ENCODE measurements at regions of chr9 and their contacts with region 1.

Region 1: GRCh38 chr9:68443624-68444023 is 87.2 kb downstream of the PGM5 start:
- DNase-seq: no peak
- ATAC-seq: no peak
- H3K4me3 ChIP-seq: no peak overlapping the region
- H3K27ac ChIP-seq: no peak overlapping the region
- H3K4me1 ChIP-seq: no peaks in the 10 kb centered on the region
- H3K27me3 ChIP-seq: peaks cover 4% of the 10 kb centered on the region
- CTCF ChIP-seq: no peak
- POLR2A ChIP-seq: no peak
- RAD21 ChIP-seq: no peak

Region 2: DNA sequence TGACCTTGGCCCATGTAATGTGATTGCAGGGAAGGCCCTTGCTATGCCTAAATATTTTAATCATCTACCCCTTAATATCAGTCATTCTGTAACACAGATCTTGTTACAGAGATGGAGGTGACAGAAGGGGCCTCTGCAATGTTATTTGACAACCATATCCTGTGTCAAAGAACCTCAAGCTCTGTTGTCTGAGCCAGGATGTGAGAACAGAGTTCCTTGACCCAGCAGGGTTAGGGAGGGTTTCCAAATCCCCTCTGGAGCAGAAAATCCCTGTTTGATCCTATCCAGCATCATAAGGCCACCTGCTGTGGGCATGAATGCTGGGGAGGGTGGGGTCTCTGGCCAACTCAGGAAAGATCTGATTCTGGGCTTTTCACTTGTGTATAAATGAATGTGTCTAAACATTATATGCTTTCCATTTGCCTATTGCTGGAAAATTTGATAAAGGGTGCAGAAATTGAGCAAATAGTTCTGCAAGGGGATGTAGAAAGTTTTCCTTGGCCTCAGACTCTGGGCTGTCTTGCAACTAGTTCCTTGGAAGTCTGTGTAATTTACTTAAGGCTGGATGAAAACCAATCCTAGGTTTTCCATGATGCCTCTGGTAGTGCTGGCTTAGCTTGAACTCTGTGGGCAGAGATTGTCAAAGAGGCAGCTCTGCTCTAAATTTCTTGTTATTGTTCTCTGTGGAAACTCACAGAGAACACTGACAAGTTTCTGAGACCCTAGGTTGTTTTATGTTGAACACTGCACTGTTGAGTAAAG is 16.2 kb before region 1 on chr9:
- CTCF ChIA-PET with region 1: no interaction called
- POLR2A ChIA-PET with region 1: no interaction called
- RAD21 ChIA-PET with region 1: no interaction called
- intact Hi-C with region 1: no loop called
- DNase-seq: no peak
- ATAC-seq: no peak
- H3K4me3 ChIP-seq: no peak overlapping the region
- H3K27ac ChIP-seq: no peak overlapping the region
- H3K4me1 ChIP-seq: no peaks in the 10 kb centered on the region
- H3K27me3 ChIP-seq: peaks cover 14% of the 10 kb centered on the region; the same call in 1 of the 2 replicates
- CTCF ChIP-seq: no peak
- POLR2A ChIP-seq: no peak
- RAD21 ChIP-seq: no peak

Region 3: DNA sequence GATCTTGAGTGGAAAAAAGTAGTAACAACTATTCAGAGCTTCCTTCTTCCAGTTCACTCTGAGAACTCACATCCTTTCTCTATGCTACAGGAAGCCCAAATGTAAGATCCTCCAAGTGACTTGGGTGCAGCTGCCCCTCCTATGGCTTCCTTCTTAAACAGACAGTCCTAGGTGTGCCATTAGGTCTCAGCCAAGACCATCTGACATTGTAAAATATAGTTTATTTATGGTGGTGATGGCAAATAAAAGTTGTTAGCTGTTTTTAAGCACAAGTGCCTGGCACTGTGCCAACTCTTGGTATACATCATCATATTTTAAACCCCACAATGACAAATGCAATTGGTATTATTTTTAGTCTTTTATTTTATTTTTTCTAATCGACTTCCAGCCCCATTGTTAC is 38.9 kb after region 1 on chr9:
- CTCF ChIA-PET with region 1: no interaction called
- POLR2A ChIA-PET with region 1: no interaction called
- RAD21 ChIA-PET with region 1: no interaction called
- intact Hi-C with region 1: loop called (anchors 5 kb)
- DNase-seq: no peak
- ATAC-seq: no peak
- H3K4me3 ChIP-seq: no peak overlapping the region
- H3K27ac ChIP-seq: no peak overlapping the region
- H3K4me1 ChIP-seq: no peaks in the 10 kb centered on the region
- H3K27me3 ChIP-seq: peaks cover 13% of the 10 kb centered on the region; the same call in 1 of the 2 replicates
- CTCF ChIP-seq: no peak
- POLR2A ChIP-seq: no peak
- RAD21 ChIP-seq: no peak

Region 4: DNA sequence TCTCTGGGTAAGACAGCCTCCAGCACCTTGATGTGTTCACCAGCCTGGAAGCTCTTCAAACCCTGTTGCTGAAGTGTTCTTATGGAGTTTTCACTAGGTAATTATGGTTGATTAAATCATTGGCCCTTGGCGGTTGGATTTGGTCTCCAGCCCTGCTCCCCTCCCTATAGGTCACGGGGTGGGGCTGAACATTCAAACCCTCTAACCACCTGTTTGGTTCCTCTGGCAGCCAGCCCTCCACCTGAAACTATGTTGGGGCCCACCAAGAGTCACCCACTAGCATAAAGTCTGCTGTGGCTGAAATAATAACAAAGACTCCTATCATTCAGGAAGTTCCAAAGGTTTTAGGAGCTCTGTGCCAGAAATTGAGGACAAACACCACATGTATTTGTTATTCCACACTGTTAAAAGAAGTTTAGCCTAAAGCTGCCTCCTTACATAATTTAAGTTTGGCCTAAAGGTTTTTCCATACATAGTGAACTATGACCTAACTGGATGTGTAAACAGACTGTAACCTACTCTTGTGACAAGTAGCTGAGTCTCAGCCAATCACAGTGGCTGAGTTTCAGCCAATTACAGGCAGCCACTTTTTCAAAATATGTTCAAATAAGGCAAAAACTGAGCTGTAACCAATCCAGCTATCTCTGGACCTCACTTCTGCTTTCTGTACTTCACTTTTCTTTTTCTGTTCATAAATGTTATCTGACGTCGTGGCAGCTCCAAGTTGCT is 62.2 kb after region 1 on chr9:
- CTCF ChIA-PET with region 1: no interaction called
- POLR2A ChIA-PET with region 1: no interaction called
- RAD21 ChIA-PET with region 1: no interaction called
- intact Hi-C with region 1: no loop called
- DNase-seq: no peak
- ATAC-seq: no peak
- H3K4me3 ChIP-seq: no peak overlapping the region
- H3K27ac ChIP-seq: no peak overlapping the region
- H3K4me1 ChIP-seq: no peaks in the 10 kb centered on the region
- H3K27me3 ChIP-seq: peaks cover 12% of the 10 kb centered on the region; the same call in 1 of the 2 replicates
- CTCF ChIP-seq: no peak
- POLR2A ChIP-seq: no peak
- RAD21 ChIP-seq: no peak

Measured in HCT116 (cell line).